ENCODE measurements at regions of chr11 and their contacts with region 1.

Region 1: GRCh38 chr11:129375751-129376657 is at the start of gene BARX2:
- DNase-seq: peak; percentile 72
- ATAC-seq: peak; percentile 74
- H3K4me3 Mint-ChIP-seq: peak within 1 kb of the TSS; percentile 50
- H3K27ac Mint-ChIP-seq: no peak within 1 kb of the TSS
- H3K4me1 Mint-ChIP-seq: peaks cover 25% of the 10 kb centered on the region
- H3K27me3 Mint-ChIP-seq: peaks cover 61% of the 10 kb centered on the region
- total RNA-seq, gene BARX2: 0.89 to 1.3 TPM

Region 2: DNA sequence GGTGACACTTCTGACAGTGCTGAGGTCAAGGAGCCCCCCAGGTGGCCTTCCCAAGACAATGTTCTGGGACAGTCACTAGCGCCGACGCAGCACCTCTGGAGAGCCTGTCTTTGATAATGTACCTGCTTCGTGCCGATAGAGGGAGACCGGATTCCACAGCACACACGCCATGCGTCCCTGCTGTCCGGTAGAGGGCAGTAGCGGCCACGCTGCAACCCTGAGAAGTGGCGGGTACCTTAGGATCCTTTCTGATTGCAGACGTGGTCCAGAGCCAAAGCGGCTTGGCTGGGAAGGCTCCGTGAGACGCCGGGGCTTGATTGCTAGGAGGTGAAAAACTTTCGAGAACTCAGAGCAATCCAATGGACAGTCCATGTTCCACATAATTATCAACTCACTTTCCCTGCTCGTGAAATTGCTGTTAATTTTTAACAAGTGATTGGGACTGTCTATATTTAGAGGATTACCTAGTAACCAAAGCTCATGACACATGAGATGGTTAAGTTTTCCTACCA is 11.8 kb before region 1 on chr11:
- CTCF ChIA-PET with region 1: interaction called, 18 read pairs
- POLR2A ChIA-PET with region 1: interaction called, 3 read pairs
- intact Hi-C with region 1: no loop called
- DNase-seq: peak; percentile 91
- ATAC-seq: peak; percentile 99
- H3K4me3 Mint-ChIP-seq: no peak overlapping the region
- H3K27ac Mint-ChIP-seq: no peak overlapping the region
- H3K4me1 Mint-ChIP-seq: no peaks in the 10 kb centered on the region
- H3K27me3 Mint-ChIP-seq: peaks cover 32% of the 10 kb centered on the region

Region 3: DNA sequence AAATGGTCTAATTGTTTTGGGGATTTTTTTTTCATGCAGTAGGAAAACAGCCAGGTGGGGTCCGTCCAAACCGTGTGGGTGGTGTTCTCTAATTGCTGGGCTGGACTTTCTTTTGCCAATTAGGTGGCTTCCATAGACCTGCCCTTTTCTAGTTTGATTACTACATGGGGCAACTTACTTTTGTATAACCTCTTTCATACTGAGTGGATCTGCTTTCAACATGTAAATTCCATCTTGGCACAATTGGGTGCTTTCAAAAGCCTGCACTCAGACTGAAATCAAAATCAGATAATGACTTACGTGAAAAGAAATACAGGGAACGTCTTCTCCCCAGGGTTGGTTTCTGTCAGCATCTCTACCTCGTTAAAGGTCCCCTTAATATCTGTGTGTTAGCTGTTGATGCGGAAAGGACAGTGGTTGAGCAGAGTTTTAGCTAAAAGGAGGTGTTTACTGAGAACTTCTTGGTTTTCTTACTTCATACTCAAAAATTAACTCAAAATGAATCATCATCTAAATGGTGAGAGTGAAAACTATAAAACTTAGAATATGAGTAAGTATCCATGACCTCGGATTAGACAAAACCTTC is 71.7 kb after region 1 on chr11:
- CTCF ChIA-PET with region 1: no interaction called
- POLR2A ChIA-PET with region 1: no interaction called
- intact Hi-C with region 1: loop called in 1 of 2 experiments (anchors 2 kb)
- DNase-seq: no peak
- ATAC-seq: peak; percentile 87
- H3K4me3 Mint-ChIP-seq: no peak overlapping the region
- H3K27ac Mint-ChIP-seq: peak overlapping the region; percentile 35
- H3K4me1 Mint-ChIP-seq: peaks cover 18% of the 10 kb centered on the region
- H3K27me3 Mint-ChIP-seq: peaks cover 3% of the 10 kb centered on the region

Region 4: GRCh38 chr11:129489254-129489653 is 113.2 kb after region 1 on chr11:
- CTCF ChIA-PET with region 1: no interaction called
- POLR2A ChIA-PET with region 1: no interaction called
- intact Hi-C with region 1: no loop called
- DNase-seq: no peak
- ATAC-seq: no peak
- H3K4me3 Mint-ChIP-seq: no peak overlapping the region
- H3K27ac Mint-ChIP-seq: no peak overlapping the region
- H3K4me1 Mint-ChIP-seq: no peaks in the 10 kb centered on the region
- H3K27me3 Mint-ChIP-seq: peaks cover 15% of the 10 kb centered on the region

Region 5: GRCh38 chr11:129639300-129639699 is 263.3 kb after region 1 on chr11:
- CTCF ChIA-PET with region 1: interaction called, 3 read pairs
- POLR2A ChIA-PET with region 1: no interaction called
- intact Hi-C with region 1: loop called (anchors 5 kb)
- DNase-seq: peak; percentile 66
- ATAC-seq: peak; percentile 81
- H3K4me3 Mint-ChIP-seq: no peak overlapping the region
- H3K27ac Mint-ChIP-seq: peak overlapping the region; percentile 72
- H3K4me1 Mint-ChIP-seq: peaks cover 75% of the 10 kb centered on the region
- H3K27me3 Mint-ChIP-seq: peaks cover 3% of the 10 kb centered on the region

Region 6: GRCh38 chr11:129695575-129696308 is 319.7 kb after region 1 on chr11:
- CTCF ChIA-PET with region 1: interaction called, 3 read pairs
- POLR2A ChIA-PET with region 1: no interaction called
- intact Hi-C with region 1: loop called (anchors 1 to 5 kb)
- DNase-seq: peak; percentile 83
- ATAC-seq: peak; percentile 86
- H3K4me3 Mint-ChIP-seq: peak overlapping the region; percentile 53
- H3K27ac Mint-ChIP-seq: peak overlapping the region; percentile 63
- H3K4me1 Mint-ChIP-seq: peaks cover 5% of the 10 kb centered on the region
- H3K27me3 Mint-ChIP-seq: peaks cover 8% of the 10 kb centered on the region

Region 7: DNA sequence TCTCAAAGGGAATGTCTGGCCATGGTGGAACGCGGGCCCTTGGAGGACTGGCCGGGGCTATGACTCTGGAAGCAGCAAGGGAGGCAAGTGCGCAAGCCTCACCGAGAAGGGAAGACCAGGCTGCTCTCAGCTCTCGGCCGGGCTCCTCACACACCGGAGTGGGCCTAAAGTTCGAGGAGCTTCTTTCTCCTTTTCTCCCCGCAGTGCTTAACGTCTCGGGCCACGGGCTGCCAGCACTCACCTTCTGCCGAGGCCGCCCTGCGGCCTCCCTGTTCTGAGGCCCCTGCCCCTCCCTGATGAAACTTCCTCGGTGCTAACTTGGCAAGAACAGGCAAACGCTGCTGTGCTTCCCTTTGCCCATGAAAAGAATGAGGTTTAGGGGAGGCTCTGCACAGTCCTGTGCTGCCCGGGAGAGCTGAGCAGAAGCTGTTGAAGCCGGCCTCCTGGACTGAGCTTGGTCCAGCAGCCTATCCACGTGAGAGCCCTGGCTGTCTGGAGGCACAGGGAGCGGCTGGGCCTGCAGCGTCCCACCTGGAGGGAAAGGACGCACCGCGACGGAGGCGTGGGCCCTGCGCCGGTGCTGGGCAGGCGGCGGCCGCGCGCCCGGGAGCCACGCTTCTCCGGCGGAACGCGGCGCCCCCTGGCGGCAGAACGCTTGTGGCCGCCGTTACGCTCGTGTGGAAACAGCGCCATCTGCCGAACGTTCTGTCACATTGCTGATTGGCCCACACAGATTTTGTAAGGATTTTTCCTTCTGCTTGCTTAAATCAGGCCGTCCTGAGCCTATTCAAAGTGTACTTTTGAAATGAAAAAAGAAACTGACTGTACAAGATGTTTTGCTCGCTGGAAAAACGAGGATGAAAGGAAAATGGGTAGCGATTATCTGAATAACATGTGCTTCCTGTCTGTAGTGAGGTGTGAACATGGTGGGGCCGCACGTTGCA is 374.6 kb after region 1 on chr11:
- CTCF ChIA-PET with region 1: interaction called, 5 read pairs
- POLR2A ChIA-PET with region 1: no interaction called
- intact Hi-C with region 1: loop called in 1 of 2 experiments (anchors 1 kb)
- DNase-seq: peak; percentile 88
- ATAC-seq: peak; percentile 93
- H3K4me3 Mint-ChIP-seq: no peak overlapping the region
- H3K27ac Mint-ChIP-seq: no peak overlapping the region
- H3K4me1 Mint-ChIP-seq: peaks cover 3% of the 10 kb centered on the region
- H3K27me3 Mint-ChIP-seq: peaks cover 12% of the 10 kb centered on the region